Left colon (tissue), 2 donors: ENCODE measurements at regions of chr17 and their contacts with region 1.

Region 1: GRCh38 chr17:70144260-70144846 is 25.0 kb upstream of the KCNJ2 start:
- DNase-seq: no peak
- ATAC-seq: no peak

Region 2: DNA sequence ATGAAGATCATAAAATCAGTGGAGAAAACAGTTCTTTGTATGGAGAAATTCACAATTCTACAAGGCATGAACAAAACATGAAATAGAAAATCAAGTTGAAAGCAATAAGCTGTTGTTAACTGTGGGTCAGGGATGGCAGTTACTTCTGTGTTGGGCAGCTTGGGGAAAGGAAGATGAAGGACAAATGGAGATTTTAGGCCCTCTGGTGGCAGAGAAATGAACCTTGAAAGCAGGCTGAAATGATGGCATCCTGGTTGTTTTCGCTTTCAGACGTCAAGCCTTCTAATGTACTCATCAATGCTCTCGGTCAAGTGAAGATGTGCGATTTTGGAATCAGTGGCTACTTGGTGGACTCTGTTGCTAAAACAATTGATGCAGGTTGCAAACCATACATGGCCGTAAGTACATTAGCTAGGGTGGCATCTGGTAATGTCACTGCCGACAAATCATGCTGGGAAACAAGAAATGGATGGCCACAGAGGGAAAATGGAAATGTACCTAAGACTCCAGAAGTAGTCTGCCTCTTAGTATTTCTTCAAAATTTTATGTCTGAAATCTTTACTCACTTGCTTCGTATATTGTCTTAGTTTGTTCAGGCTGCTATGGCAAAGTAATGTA is 621.0 kb before region 1 on chr17:
- intact Hi-C with region 1: loop called in 1 of 2 experiments (anchors 10 kb)
- DNase-seq: no peak
- ATAC-seq: peak; percentile 83

Region 3: DNA sequence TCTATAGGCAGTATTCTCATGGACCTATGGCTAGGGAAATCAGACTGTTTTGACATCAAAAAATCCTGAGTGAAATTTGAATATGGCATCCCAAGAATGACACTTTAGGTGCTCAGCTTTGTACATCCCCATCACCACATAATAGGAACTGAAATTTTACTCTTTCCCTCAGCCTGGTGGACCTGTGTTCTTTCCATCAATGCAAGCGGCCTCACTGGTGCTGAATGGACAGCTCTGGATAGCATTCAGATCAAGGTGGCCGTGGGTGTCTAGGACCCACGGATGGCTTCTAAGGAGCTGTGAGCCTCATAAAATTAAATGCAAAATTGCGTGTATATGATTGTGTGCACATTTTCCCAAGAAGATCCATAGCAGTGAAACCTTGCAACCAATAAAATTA is 577.2 kb before region 1 on chr17:
- intact Hi-C with region 1: loop called in 1 of 2 experiments (anchors 5 kb)
- DNase-seq: no peak
- ATAC-seq: no peak

Region 4: GRCh38 chr17:69607162-69607834 is 537.1 kb before region 1 on chr17:
- intact Hi-C with region 1: loop called in 1 of 2 experiments (anchors 5 kb)
- DNase-seq: peak; percentile 53 to 81
- ATAC-seq: peak; percentile 89

Region 5: DNA sequence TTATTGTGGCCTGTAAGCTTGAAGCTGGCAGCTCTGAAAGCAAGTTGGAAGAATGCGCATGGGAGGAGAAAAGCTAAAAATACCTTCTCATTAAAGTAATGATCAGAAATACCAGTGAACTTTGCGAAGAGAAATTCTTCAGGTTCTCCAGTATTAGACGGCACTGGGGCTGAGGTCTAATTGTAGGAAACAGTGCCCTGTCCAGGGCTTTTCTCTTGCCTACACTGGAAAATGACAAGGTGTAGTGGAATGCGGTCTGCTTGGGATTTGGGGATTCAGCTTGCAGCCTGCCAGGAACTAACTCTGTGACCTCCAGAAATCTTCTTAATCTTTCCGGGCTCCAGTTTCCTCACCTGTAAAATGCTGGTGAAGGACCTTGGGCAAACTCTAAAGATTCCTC is 122.6 kb before region 1 on chr17:
- intact Hi-C with region 1: no loop called
- DNase-seq: no peak
- ATAC-seq: no peak

Region 6: GRCh38 chr17:70225276-70225675 is 80.9 kb after region 1 on chr17:
- intact Hi-C with region 1: no loop called
- DNase-seq: no peak
- ATAC-seq: no peak

Region 7: GRCh38 chr17:70295731-70296130 is 151.4 kb after region 1 on chr17:
- intact Hi-C with region 1: no loop called
- DNase-seq: no peak
- ATAC-seq: no peak